Activated CD8-positive, alpha-beta T cell treated with anti-CD3 and anti-CD28 coated beads for 36 hours (primary cell): ENCODE measurements at regions of chr2 and their contacts with region 1.

Region 1: GRCh38 chr2:30711646-30712085 is 95.6 kb downstream of the CAPN13 start:
- DNase-seq: peak; percentile 93
- ATAC-seq: peak; percentile 91
- H3K4me3 Mint-ChIP-seq: no peak overlapping the region
- H3K27ac Mint-ChIP-seq: no peak overlapping the region
- H3K4me1 Mint-ChIP-seq: peaks cover 12% of the 10 kb centered on the region
- H3K27me3 Mint-ChIP-seq: no peaks in the 10 kb centered on the region
- CTCF ChIP-seq: peak; percentile 100

Region 2: GRCh38 chr2:30146438-30147147 is 565.1 kb before region 1 on chr2 and contains the start of gene YPEL5:
- CTCF ChIA-PET with region 1: interaction called, 40 read pairs
- POLR2A ChIA-PET with region 1: no interaction called
- intact Hi-C with region 1: no loop called
- DNase-seq: peak; percentile 99
- ATAC-seq: peak; percentile 92
- H3K4me3 Mint-ChIP-seq: peak within 1 kb of the TSS; percentile 85
- H3K27ac Mint-ChIP-seq: peak within 1 kb of the TSS; percentile 98
- H3K4me1 Mint-ChIP-seq: peaks cover 51% of the 10 kb centered on the region
- H3K27me3 Mint-ChIP-seq: no peaks in the 10 kb centered on the region
- CTCF ChIP-seq: no peak
- total RNA-seq, gene YPEL5: 28.0 to 28.4 TPM

Region 3: DNA sequence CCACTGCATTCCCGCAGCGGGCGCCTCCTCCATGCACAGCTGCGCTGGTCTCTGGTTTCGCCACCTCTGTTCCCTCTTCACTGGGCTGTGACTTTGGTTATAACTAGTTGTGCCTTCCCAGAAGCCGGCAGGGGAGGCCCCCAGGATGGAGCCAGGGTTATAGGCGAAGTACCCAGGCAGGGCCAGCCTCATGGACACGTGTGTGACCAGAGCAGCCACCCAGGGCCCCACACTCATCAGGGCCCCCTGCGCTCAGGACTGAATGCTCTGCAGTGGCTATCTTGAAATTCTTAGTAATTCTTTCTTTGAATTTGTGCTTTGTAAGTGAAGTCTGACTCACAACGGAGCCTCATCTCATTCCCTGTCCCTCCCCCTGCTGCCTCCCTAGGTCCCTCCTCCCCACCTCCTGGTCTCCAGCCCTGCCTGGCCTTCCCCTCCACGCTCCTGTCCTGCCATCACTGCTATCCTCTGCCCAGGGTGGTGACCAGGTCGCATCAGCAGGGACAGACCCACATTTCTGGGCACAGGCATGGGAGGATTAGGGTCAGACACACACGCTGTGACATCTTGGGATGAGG is 518.5 kb before region 1 on chr2:
- CTCF ChIA-PET with region 1: interaction called, 15 read pairs
- POLR2A ChIA-PET with region 1: no interaction called
- intact Hi-C with region 1: no loop called
- DNase-seq: no peak
- ATAC-seq: no peak
- H3K4me3 Mint-ChIP-seq: no peak overlapping the region
- H3K27ac Mint-ChIP-seq: no peak overlapping the region
- H3K4me1 Mint-ChIP-seq: peaks cover 6% of the 10 kb centered on the region
- H3K27me3 Mint-ChIP-seq: no peaks in the 10 kb centered on the region
- CTCF ChIP-seq: no peak

Region 4: GRCh38 chr2:30620102-30620501 is 91.6 kb before region 1 on chr2:
- CTCF ChIA-PET with region 1: interaction called, 15 read pairs
- POLR2A ChIA-PET with region 1: no interaction called
- intact Hi-C with region 1: no loop called
- DNase-seq: no peak
- ATAC-seq: no peak
- H3K4me3 Mint-ChIP-seq: no peak overlapping the region
- H3K27ac Mint-ChIP-seq: no peak overlapping the region
- H3K4me1 Mint-ChIP-seq: peaks cover 25% of the 10 kb centered on the region
- H3K27me3 Mint-ChIP-seq: no peaks in the 10 kb centered on the region
- CTCF ChIP-seq: no peak

Region 5: GRCh38 chr2:30721668-30722647 is 10.3 kb after region 1 on chr2:
- CTCF ChIA-PET with region 1: interaction called, 22 read pairs
- POLR2A ChIA-PET with region 1: no interaction called
- intact Hi-C with region 1: no loop called
- DNase-seq: no peak
- ATAC-seq: no peak
- H3K4me3 Mint-ChIP-seq: no peak overlapping the region
- H3K27ac Mint-ChIP-seq: no peak overlapping the region
- H3K4me1 Mint-ChIP-seq: no peaks in the 10 kb centered on the region
- H3K27me3 Mint-ChIP-seq: peaks cover 10% of the 10 kb centered on the region
- CTCF ChIP-seq: no peak

Region 6: DNA sequence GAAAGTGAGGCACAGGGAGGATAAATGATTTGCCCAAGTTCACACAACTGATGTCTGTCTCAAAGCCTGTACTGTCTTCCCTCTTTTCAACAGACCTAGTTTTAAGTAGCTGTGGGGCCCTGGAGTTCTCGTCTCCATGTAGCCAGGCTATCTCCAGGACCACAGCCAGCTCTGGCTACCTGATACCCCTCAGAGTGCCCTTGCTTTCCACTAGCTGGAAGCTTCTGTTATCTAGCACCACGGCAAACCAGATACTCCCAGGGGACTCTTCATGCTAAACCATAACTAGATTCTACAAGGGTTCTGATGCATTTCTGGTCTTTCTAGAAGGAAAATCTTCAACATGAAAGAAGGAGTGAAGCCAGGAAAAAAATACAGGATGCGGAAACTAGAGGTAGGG is 289.3 kb after region 1 on chr2:
- CTCF ChIA-PET with region 1: no interaction called
- POLR2A ChIA-PET with region 1: no interaction called
- intact Hi-C with region 1: no loop called
- DNase-seq: no peak
- ATAC-seq: no peak
- H3K4me3 Mint-ChIP-seq: no peak overlapping the region
- H3K27ac Mint-ChIP-seq: no peak overlapping the region
- H3K4me1 Mint-ChIP-seq: no peaks in the 10 kb centered on the region
- H3K27me3 Mint-ChIP-seq: peaks cover 2% of the 10 kb centered on the region
- CTCF ChIP-seq: no peak

Region 7: DNA sequence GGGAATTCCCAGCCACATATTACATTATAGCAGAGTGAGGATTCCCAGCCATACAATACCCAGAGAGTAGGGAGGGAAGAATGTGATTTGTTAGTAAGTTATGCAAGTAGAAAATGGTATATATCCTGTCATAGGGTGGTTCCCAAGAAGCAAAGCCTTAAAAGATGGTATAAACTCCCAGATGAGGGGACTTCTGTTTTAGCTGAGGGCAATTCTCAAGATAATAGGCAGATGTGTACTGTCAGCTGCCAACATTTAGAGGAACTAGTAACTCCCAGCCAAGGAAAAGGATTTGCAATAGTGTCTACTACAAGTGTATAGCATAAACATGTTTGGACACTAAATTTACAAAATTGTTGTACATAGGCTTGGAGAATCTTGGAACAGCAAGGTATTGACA is 616.4 kb after region 1 on chr2:
- CTCF ChIA-PET with region 1: interaction called, 54 read pairs
- POLR2A ChIA-PET with region 1: no interaction called
- intact Hi-C with region 1: loop called (anchors 5 kb)
- DNase-seq: no peak
- ATAC-seq: no peak
- H3K4me3 Mint-ChIP-seq: no peak overlapping the region
- H3K27ac Mint-ChIP-seq: no peak overlapping the region
- H3K4me1 Mint-ChIP-seq: peaks cover 17% of the 10 kb centered on the region
- H3K27me3 Mint-ChIP-seq: no peaks in the 10 kb centered on the region
- CTCF ChIP-seq: no peak